ENCODE measurements at regions of chr5 and their contacts with region 1.

Region 1: DNA sequence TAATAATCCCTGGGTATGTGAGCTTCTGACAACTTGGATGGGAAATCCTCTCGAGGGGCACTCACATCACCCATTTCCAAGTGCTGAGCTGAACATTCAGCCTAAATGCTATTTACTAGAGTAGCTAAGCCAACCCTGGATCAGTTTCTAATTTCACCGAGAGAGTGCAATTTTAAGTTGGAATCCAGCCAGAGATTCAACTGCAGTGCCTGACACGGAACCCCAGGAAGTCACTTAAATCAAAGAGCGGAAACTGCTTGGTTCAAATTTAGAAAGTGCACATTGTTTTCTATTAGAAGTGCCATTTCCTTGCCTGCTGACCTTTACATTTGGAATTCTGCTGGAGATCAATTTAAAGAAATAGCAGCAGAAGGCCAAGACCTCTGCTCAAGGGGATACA is 8.8 kb downstream of the SPRY4 start:
- DNase-seq: peak in 1 of 2 donors; percentile 55
- ATAC-seq: peak in 7 of 8 donors; percentile 38 to 62 (median 43)
- H3K4me3 ChIP-seq: peak overlapping the region in 5 of 10 donors; percentile 3 to 25 (median 10)
- H3K27ac ChIP-seq: peak overlapping the region in 8 of 10 donors; percentile 46 to 95 (median 80)
- H3K4me1 ChIP-seq: peaks cover 27 to 100% (median 83%) of the 10 kb centered on the region in 9 donors
- H3K27me3 ChIP-seq: peaks cover 0 to 6% (median 0%) of the 10 kb centered on the region in 7 donors
- CTCF ChIP-seq: no peak

Region 2: GRCh38 chr5:142156839-142157463 is 159.1 kb before region 1 on chr5:
- intact Hi-C with region 1: loop called in 5 of 10 experiments (anchors 5 to 10 kb)
- DNase-seq: no peak
- ATAC-seq: peak in 3 of 8 donors; percentile 46 to 54 (median 49)
- H3K4me3 ChIP-seq: no peak overlapping the region
- H3K27ac ChIP-seq: peak overlapping the region in 1 of 10 donors; percentile 14
- H3K4me1 ChIP-seq: peaks cover 3 to 22% (median 9%) of the 10 kb centered on the region in 9 donors
- H3K27me3 ChIP-seq: no peaks in the 10 kb centered on the region
- CTCF ChIP-seq: no peak

Region 3: DNA sequence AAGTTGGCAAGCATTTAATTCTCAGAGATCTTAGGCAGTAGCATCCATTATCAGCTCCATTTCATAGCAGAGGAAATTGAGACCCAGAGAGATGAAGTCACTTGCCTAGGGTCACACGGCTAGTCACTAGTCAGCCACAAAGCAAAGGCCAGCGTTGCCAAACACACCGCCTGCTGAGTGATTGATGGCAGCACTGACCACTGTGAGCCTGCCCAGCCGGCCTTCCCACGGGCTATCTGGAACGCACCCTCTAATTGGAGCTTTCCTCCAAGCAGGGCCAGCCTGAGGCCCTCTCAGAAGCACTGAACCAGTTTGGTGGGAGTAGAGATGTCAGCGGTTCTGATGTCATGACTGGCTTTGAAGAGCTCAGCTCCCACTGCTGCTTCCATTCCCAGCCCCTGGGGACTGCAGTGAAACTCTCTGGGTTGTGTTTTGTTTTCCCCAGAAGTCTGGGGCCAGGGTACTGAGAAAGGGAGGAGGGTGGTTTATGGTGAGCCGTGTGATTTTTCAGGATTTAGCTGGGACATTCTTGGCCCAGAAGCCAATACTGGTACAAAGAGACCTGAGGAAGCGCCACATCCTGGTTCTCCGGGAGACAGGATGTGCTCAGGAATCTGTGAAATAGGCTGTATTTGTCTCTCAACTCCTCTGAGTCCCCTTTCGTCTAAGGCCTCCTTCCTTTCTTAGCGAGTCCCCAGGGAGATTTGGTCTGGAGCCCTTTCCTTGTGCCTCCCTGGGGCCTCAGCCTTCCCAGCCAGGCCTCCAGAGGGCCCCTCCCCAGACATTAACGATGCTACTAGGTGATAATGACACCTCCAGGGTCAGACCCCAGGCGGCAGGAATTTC is 35.8 kb before region 1 on chr5:
- intact Hi-C with region 1: loop called in 1 of 10 experiments (anchors 5 kb)
- DNase-seq: peak; percentile 79 to 88
- ATAC-seq: peak; percentile 88 to 93 (median 92)
- H3K4me3 ChIP-seq: no peak overlapping the region
- H3K27ac ChIP-seq: peak overlapping the region; percentile 62 to 89 (median 76)
- H3K4me1 ChIP-seq: peaks cover 6 to 39% (median 27%) of the 10 kb centered on the region in 9 donors
- H3K27me3 ChIP-seq: no peaks in the 10 kb centered on the region
- CTCF ChIP-seq: no peak

Measured in heart right ventricle (tissue), 16 donors.